PC-9 (cell line): ENCODE measurements at regions of chr9 and their contacts with region 1.

Region 1: DNA sequence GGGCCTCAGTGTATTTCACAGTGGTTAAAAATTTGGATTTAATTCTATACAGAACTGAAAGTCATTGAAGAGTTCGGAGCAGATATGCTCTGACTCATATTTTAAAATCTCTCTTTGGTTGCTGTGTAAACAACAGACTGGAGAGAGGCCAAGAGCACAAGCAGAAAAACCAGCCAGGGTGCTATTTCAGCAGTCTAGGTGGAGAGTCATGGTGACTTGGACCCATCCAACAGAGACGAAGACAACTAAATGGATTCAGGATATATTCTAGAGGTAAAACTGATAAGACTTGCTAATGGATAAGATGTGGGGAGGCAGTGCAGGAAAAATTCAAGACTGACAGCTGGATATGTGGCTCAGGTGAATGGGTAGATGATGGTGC is 168.9 kb downstream of the MAPKAP1 start:
- DNase-seq: peak; percentile 88 to 92
- H3K4me3 ChIP-seq: peak overlapping the region; percentile 37; the same call in 1 of the 2 replicates
- H3K27ac ChIP-seq: peak overlapping the region; percentile 94
- H3K4me1 ChIP-seq: peaks cover 74% of the 10 kb centered on the region
- H3K27me3 ChIP-seq: no peaks in the 10 kb centered on the region
- CTCF ChIP-seq: no peak

Region 2: DNA sequence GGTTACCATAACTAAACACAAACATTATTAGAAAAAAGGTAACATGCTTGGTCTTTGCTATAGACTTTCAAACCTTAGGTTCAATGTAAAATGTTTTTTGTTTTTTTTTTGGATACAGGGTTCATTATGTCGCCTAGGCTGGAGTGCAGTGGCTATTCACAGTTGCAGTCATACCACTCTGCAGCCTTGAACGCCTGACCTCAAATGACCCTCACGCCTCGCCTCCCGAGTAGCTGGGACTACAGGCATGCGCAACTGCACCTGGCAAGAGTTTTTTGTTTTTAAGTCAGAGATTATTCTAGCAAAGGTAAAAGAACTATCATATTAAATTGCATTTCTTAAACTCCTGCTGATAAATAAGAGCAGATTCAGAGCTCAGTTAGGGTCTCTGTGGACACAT is 975.8 kb before region 1 on chr9:
- CTCF ChIA-PET with region 1: no interaction called
- POLR2A ChIA-PET with region 1: no interaction called
- intact Hi-C with region 1: no loop called
- DNase-seq: no peak
- H3K4me3 ChIP-seq: no peak overlapping the region
- H3K27ac ChIP-seq: no peak overlapping the region
- H3K4me1 ChIP-seq: peaks cover 17% of the 10 kb centered on the region
- H3K27me3 ChIP-seq: no peaks in the 10 kb centered on the region
- CTCF ChIP-seq: no peak

Region 3: DNA sequence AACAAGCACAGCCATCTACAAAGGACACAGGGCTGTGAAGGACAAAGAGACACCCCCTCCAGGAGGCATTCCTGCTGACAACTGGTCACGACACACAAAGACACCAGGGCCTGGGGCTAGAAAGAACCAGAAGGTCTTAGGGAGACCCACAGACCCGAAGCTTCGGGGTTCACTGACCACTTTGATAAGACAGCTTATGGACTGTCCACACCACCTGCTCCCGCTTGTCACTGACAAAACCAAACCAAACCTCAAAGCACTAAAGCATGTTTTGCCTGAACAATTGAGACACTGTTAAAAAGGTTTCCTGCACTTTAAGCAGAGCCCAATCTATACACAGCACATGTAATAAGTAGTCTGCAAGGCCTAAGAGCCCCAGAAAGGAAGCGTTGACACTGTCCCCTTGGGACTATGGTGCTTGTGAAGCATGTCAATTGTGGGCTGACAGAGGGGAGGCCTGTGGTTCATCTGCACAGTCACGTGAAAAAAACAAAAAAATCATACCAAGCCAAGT is 91.4 kb before region 1 on chr9:
- CTCF ChIA-PET with region 1: interaction called, 4 read pairs
- POLR2A ChIA-PET with region 1: interaction called, 5 read pairs
- intact Hi-C with region 1: loop called (anchors 10 kb)
- DNase-seq: no peak
- H3K4me3 ChIP-seq: no peak overlapping the region
- H3K27ac ChIP-seq: no peak overlapping the region
- H3K4me1 ChIP-seq: peaks cover 7% of the 10 kb centered on the region
- H3K27me3 ChIP-seq: no peaks in the 10 kb centered on the region
- CTCF ChIP-seq: no peak

Region 4: DNA sequence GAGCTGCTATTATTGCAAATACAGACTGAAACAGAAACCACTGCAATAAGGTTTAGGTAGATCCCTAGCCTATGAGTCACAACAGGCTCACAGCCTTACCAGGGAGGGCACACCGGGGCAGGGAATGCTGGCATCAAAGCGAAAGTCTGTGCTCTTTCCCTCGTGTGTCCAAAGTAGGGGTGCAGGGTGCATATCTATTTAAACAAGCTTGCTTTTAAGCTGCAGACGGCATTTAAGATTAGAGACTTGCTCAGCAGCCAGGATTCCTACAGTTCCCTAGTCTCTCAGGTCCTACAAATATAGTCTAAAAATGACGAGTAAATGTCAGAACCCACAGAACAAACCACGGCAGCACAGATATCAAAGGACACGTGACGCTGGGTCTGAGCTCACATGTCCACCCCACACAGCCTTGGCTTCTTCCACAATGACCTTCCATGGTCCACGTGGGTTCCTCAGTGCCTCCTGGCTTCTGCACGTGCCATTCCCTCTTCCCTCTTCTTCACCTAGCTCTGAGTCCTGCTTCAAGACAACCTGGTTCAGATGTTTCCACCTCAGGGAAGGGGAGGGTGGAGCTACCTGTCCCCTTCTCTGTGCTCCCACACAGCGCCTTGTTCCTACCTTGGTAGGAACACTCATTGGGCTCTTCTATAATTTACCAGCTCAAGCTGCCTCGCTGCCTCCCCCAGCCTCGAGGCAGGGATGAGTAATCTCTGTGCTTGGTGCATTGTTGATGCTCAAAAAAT is 24.2 kb before region 1 on chr9:
- CTCF ChIA-PET with region 1: no interaction called
- POLR2A ChIA-PET with region 1: interaction called, 3 read pairs
- intact Hi-C with region 1: loop called (anchors 1 kb)
- DNase-seq: peak; percentile 75 to 95
- H3K4me3 ChIP-seq: peak overlapping the region; percentile 57
- H3K27ac ChIP-seq: peak overlapping the region; percentile 85
- H3K4me1 ChIP-seq: peaks cover 25% of the 10 kb centered on the region
- H3K27me3 ChIP-seq: no peaks in the 10 kb centered on the region
- CTCF ChIP-seq: no peak

Region 5: DNA sequence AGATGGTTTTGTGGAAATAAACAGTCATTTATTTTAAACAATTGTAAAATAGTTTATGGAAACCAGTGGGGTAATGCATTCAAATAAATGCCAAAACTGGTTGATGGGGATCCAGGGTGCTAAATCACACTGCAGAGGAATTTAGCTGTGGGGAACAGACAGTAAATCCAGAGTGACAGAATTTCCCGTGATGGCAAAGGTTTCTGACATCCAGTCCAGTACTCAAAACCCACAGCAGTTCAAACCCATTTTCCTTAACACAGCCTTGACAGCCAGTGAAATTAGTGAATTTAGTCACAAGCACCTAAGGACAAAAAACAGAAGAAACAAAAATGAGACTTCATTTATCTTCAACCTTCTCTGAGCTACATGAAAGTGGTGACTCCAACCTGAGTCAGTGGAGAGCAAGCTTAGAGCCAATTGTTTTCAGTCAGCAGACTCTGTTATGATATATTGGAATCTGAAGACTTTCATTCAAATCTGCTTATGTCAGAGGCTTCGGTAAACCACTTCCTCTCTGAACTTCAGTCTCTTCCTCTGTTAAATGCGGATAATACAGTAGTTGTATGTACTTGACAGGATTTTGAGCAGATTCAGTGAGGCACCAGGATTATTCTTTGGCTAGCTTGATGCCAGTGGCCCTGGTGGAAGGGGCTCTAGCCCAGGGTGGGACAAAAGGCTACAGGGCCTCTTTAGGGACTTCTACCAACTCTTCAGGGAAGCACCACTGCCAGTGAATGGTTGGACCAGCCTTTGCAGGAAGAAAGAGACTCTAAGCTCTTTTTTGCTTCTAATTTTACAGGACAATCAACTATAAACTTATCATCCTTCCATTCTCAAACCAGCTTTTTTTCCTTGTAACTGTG is 16.4 kb before region 1 on chr9:
- CTCF ChIA-PET with region 1: interaction called, 3 read pairs
- POLR2A ChIA-PET with region 1: interaction called, 3 read pairs
- intact Hi-C with region 1: loop called (anchors 1 kb)
- DNase-seq: peak in 1 of 2 experiments; percentile 84
- H3K4me3 ChIP-seq: peak overlapping the region; percentile 11; the same call in 1 of the 2 replicates
- H3K27ac ChIP-seq: peak overlapping the region; percentile 87
- H3K4me1 ChIP-seq: peaks cover 34% of the 10 kb centered on the region
- H3K27me3 ChIP-seq: no peaks in the 10 kb centered on the region
- CTCF ChIP-seq: no peak